Activated naive CD4-positive, alpha-beta T cell treated with anti-CD3 and anti-CD28 coated beads, Interleukin-2, amount 10 ng/mL, durations not matched to agents 7 days and 5 days (primary cell): ENCODE measurements at regions of chr14 and their contacts with region 1.

Region 1: GRCh38 chr14:58501214-58501816 is 73.8 kb downstream of the KIAA0586 start:
- DNase-seq: peak; percentile 46
- H3K4me3 Mint-ChIP-seq: no peak overlapping the region
- H3K27ac Mint-ChIP-seq: no peak overlapping the region
- H3K4me1 Mint-ChIP-seq: no peaks in the 10 kb centered on the region
- H3K27me3 Mint-ChIP-seq: no peaks in the 10 kb centered on the region

Region 2: DNA sequence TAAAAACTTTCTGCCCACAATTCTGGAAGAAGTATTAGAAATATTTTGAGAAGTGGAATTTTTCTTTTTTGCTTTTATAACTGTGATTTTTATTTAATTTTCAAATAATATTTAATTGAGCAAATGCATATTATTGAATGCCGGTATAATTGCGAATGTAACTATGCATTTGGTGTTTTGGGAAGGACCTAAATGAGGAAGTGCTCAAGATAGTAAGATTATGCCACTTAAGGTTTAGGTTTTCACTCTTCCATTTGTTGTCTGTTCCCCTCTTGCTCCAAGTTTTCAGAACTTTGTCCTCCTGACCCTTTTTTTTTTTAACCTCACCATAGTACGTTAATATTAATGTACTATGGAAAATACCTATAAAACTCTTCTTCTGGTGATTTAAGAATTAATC is 12.0 kb after region 1 on chr14:
- CTCF ChIA-PET with region 1: interaction called, 12 read pairs
- DNase-seq: no peak
- H3K4me3 Mint-ChIP-seq: no peak overlapping the region
- H3K27ac Mint-ChIP-seq: no peak overlapping the region
- H3K4me1 Mint-ChIP-seq: no peaks in the 10 kb centered on the region
- H3K27me3 Mint-ChIP-seq: no peaks in the 10 kb centered on the region

Region 3: DNA sequence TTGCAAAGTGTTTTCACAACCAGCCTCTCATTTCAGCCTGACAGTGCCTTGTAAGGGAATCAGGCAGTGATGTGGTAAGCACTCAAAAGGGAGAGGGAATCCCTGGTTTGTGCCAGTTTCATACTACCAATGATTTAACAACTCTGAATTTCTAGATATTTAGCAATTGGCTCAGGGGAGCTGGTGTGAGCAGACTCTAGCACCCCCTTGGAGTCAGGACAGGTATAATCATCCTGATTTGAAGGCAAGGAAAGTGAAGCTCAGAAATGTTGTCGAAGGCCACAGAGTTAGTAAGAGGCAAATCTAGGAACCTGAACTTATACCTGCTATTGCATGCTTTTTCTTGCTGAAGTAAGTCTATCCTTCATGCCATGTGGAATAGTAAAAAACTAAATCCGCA is 73.3 kb after region 1 on chr14:
- CTCF ChIA-PET with region 1: interaction called, 17 read pairs
- DNase-seq: no peak
- H3K4me3 Mint-ChIP-seq: no peak overlapping the region
- H3K27ac Mint-ChIP-seq: no peak overlapping the region
- H3K4me1 Mint-ChIP-seq: peaks cover 37% of the 10 kb centered on the region
- H3K27me3 Mint-ChIP-seq: no peaks in the 10 kb centered on the region

Region 4: GRCh38 chr14:58637391-58638230 is 136.3 kb after region 1 on chr14 and contains the start of gene DACT1:
- CTCF ChIA-PET with region 1: interaction called, 31 read pairs
- DNase-seq: peak; percentile 84
- H3K4me3 Mint-ChIP-seq: peak within 1 kb of the TSS; percentile 92
- H3K27ac Mint-ChIP-seq: peak within 1 kb of the TSS; percentile 92
- H3K4me1 Mint-ChIP-seq: peaks cover 57% of the 10 kb centered on the region
- H3K27me3 Mint-ChIP-seq: peaks cover 25% of the 10 kb centered on the region

Region 5: DNA sequence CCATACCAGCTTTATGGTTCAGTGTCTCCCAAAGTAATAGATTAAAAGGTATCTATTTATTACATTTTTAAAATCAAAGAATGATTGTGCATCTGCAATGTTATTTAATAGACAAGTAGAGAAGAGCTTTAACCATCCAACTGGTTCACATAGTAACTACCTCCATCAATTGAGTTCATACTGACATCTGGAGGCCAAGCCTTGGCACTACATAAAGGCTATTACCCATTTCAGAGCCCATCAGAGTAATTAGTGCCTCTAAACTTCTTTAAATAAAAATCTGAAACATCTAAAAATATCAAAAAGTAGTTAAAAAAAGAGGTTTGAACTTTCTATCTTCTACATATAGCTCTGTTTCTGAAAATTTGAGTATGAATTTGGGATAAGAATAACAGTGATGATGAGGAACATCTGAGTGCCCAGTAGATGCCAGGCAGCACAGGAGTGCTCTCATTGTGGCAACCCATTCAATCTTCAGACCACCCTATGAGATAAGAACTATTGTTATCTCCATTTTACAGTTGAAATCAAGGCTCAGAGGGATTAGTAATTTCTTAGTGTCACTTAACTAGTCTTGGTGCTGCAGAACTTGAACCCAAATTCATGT is 554.2 kb after region 1 on chr14:
- CTCF ChIA-PET with region 1: interaction called, 14 read pairs
- DNase-seq: peak; percentile 54
- H3K4me3 Mint-ChIP-seq: no peak overlapping the region
- H3K27ac Mint-ChIP-seq: no peak overlapping the region
- H3K4me1 Mint-ChIP-seq: no peaks in the 10 kb centered on the region
- H3K27me3 Mint-ChIP-seq: no peaks in the 10 kb centered on the region

Region 6: GRCh38 chr14:59126710-59127432 is 625.6 kb after region 1 on chr14:
- CTCF ChIA-PET with region 1: interaction called, 14 read pairs
- DNase-seq: peak; percentile 31
- H3K4me3 Mint-ChIP-seq: no peak overlapping the region
- H3K27ac Mint-ChIP-seq: no peak overlapping the region
- H3K4me1 Mint-ChIP-seq: no peaks in the 10 kb centered on the region
- H3K27me3 Mint-ChIP-seq: peaks cover 10% of the 10 kb centered on the region